Posterior vena cava (tissue), 2 donors: ENCODE measurements at regions of chr1 and their contacts with region 1.

Region 1: DNA sequence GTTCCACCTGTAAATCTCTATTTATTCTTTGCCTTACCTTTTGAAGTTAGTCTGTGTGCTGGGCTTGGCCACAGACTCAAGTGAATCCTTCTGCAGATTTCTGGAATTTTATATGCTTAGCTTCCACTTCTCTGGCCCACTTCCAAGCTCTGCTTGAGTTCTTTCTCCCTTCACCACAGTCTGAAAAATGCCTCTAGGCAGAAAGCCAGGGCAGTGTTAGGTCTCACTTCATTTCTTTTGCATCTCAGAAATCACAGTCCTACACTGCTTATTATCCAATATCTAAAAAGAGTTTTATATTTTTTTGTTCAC is 48.9 kb downstream of the INKA2 start:
- DNase-seq: no peak

Region 2: GRCh38 chr1:111139956-111140679 is 550.1 kb before region 1 on chr1 and contains the starts of genes CEPT1 and DRAM2:
- intact Hi-C with region 1: loop called in 1 of 2 experiments (anchors 5 kb)
- DNase-seq: peak; percentile 98
- total RNA-seq, gene CEPT1: 23.5 to 29.2 TPM
- total RNA-seq, gene DRAM2: 24.9 to 25.7 TPM

Region 3: GRCh38 chr1:111619635-111620440 is 70.4 kb before region 1 on chr1 and contains the start of gene RAP1A:
- intact Hi-C with region 1: no loop called
- DNase-seq: peak; percentile 98
- total RNA-seq, gene RAP1A: 187 to 227 TPM